Common myeloid progenitor, CD34-positive (primary cell): ENCODE measurements at regions of chr17 and their contacts with region 1.

Region 1: GRCh38 chr17:59753522-59754467 is 46.3 kb downstream of the VMP1 start:
- DNase-seq: peak; percentile 84 to 92 (median 89)
- H3K4me3 ChIP-seq: peak overlapping the region in 4 of 7 experiments; percentile 19 to 49 (median 35)
- H3K27ac ChIP-seq: peak overlapping the region; percentile 73 to 83
- H3K4me1 ChIP-seq: peaks cover 3 to 14% (median 11%) of the 10 kb centered on the region in 4 experiments
- H3K27me3 ChIP-seq: no peaks in the 10 kb centered on the region

Region 2: GRCh38 chr17:59769891-59770290 is 16.1 kb after region 1 on chr17:
- CTCF ChIA-PET with region 1: interaction called, 11 read pairs
- POLR2A ChIA-PET with region 1: no interaction called
- DNase-seq: peak in 1 of 3 donors; percentile 53
- H3K4me3 ChIP-seq: peak overlapping the region in 1 of 7 experiments; percentile 0
- H3K27ac ChIP-seq: peak overlapping the region in 1 of 2 experiments; percentile 32
- H3K4me1 ChIP-seq: peaks cover 5 to 17% (median 11%) of the 10 kb centered on the region in 4 experiments
- H3K27me3 ChIP-seq: no peaks in the 10 kb centered on the region

Region 3: GRCh38 chr17:59778996-59779395 is 25.2 kb after region 1 on chr17:
- CTCF ChIA-PET with region 1: interaction called, 13 read pairs
- POLR2A ChIA-PET with region 1: no interaction called
- DNase-seq: no peak
- H3K4me3 ChIP-seq: no peak overlapping the region
- H3K27ac ChIP-seq: no peak overlapping the region
- H3K4me1 ChIP-seq: peaks cover 7 to 18% (median 14%) of the 10 kb centered on the region in 4 experiments
- H3K27me3 ChIP-seq: no peaks in the 10 kb centered on the region

Region 4: GRCh38 chr17:59786536-59787319 is 32.9 kb after region 1 on chr17:
- CTCF ChIA-PET with region 1: interaction called, 26 read pairs
- POLR2A ChIA-PET with region 1: no interaction called
- DNase-seq: peak; percentile 96 to 99 (median 98)
- H3K4me3 ChIP-seq: peak overlapping the region in 6 of 7 experiments; percentile 21 to 65 (median 51)
- H3K27ac ChIP-seq: peak overlapping the region; percentile 93 to 96
- H3K4me1 ChIP-seq: peaks cover 37 to 79% (median 64%) of the 10 kb centered on the region in 4 experiments
- H3K27me3 ChIP-seq: no peaks in the 10 kb centered on the region

Region 5: DNA sequence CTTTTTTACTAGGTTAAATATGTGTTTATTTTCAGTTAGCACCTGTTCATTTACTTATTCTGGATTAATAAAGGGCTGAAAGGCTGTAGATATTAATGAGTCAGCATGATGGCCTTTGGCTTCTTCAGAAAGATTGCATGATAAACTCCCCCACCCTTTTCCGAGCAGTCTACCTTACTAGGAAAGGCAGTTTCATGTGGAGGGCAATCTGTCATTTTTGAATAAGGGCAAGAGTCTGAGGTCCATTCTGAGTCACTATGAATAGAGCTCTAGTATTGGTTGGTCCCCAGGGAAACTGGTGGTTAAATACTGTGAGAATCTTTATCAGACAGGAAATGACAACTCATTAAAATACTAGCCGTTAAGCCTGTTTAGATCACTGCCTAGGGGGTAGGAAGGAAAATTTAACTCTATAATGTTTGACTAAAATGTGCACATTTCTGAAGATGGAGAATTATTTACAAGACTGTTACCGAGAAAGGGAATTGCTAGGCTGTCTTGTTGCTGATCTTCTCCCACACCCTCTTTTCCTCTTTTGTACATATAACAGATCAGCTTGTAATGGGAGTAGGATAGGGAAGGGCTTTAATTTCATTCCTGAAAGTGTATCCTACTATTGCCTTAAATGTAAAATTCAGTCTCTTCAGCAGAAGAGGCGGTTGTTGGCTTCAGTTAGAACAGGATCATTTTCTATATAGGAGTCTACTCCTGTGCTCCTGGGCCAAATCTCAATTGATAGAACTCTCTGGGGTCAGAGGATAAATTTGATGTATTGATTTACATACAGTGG is 75.6 kb after region 1 on chr17:
- CTCF ChIA-PET with region 1: interaction called, 23 read pairs
- POLR2A ChIA-PET with region 1: interaction called, 3 read pairs
- DNase-seq: peak; percentile 95 to 99 (median 97)
- H3K4me3 ChIP-seq: peak overlapping the region in 6 of 7 experiments; percentile 8 to 61 (median 46)
- H3K27ac ChIP-seq: peak overlapping the region; percentile 98 to 99
- H3K4me1 ChIP-seq: peaks cover 48 to 77% (median 73%) of the 10 kb centered on the region in 4 experiments
- H3K27me3 ChIP-seq: no peaks in the 10 kb centered on the region

Region 6: DNA sequence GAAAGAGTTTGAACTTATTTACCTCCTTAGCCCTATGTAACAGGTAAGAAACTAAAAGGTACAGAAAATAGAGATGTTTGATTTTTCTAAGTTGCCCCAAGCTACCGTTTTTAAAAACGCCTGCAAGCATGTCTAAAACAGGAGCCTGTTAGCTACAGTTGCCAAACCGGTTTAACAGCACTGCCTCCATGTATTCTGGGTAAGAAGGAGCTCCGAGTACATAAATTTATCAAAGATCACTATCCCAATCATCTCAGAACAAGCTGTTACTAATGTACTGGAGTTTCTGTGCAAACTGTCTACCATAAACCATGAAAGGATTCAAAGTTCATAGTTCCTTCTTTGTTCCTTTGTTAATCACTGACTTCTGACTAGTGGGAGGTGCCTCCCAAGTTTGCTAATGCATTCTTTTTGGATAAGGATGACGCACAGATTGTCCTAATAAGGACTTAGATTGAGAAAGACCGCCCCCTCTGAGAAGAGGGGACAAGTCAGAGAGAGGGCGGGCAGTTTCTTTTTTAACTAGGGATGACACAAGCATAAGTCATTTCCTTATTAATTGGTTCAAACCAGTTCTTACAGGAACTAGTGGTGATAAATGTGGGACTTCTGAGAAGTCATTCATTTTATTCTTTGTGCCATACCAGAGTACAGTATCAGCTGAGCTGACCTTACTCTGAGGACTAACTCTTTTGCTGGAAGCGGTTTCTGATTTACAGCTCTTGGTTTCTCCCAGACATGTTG is 83.7 kb after region 1 on chr17:
- CTCF ChIA-PET with region 1: interaction called, 23 read pairs
- POLR2A ChIA-PET with region 1: interaction called, 7 read pairs
- DNase-seq: peak; percentile 97 to 100 (median 99)
- H3K4me3 ChIP-seq: peak overlapping the region in 6 of 7 experiments; percentile 78 to 100 (median 90)
- H3K27ac ChIP-seq: peak overlapping the region; percentile 96
- H3K4me1 ChIP-seq: peaks cover 20 to 45% (median 38%) of the 10 kb centered on the region in 4 experiments
- H3K27me3 ChIP-seq: no peaks in the 10 kb centered on the region